ENCODE measurements at regions of chr2 and their contacts with region 1.

Region 1: GRCh38 chr2:101341901-101342624 is 33.6 kb upstream of the RNF149 start:
- DNase-seq: peak; percentile 80
- H3K4me3 ChIP-seq: no peak overlapping the region
- H3K27ac ChIP-seq: no peak overlapping the region
- H3K4me1 ChIP-seq: no peaks in the 10 kb centered on the region
- H3K27me3 ChIP-seq: no peaks in the 10 kb centered on the region
- CTCF ChIP-seq: peak; percentile 89

Region 2: DNA sequence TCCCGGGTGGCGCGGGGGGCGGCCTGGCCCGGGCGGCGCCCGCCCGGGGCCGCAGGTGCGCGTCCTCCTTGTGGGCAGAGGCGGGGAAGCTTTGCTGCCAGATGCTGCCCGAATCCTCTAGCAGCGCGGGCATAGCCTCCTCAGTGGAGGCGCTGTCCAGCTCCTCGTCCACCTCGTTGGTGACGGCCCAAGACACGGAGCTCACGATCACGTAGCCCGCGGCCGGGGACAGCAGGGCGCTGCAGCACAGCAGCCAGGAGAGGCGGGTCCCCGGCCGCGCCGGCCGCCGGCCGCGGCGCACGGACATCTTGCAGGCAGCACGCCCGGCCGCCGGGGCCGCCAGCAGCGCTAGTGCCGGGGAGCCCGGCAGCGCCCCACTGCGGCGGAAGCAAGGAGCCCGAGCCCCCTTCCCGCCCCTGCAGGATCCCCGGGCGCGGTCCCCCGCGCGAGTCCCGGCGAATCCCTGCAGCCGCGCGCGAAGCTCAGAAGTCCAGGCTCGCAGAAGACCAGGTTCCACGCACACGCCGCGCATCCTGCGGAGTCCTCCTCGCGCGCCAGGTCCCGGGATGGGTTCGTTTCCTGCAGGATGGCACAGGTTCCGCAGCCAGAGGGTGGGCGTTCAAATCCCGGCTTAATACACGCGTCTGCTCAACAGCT is 45.2 kb after region 1 on chr2 and contains the start of gene CREG2:
- CTCF ChIA-PET with region 1: interaction called, 13 read pairs
- POLR2A ChIA-PET with region 1: no interaction called
- intact Hi-C with region 1: no loop called
- DNase-seq: peak; percentile 60
- H3K4me3 ChIP-seq: peak within 1 kb of the TSS; percentile 46
- H3K27ac ChIP-seq: no peak within 1 kb of the TSS
- H3K4me1 ChIP-seq: peaks cover 5% of the 10 kb centered on the region
- H3K27me3 ChIP-seq: peaks cover 59% of the 10 kb centered on the region
- CTCF ChIP-seq: peak; percentile 54
- total RNA-seq, gene CREG2: not detected in 2 replicates

Region 3: DNA sequence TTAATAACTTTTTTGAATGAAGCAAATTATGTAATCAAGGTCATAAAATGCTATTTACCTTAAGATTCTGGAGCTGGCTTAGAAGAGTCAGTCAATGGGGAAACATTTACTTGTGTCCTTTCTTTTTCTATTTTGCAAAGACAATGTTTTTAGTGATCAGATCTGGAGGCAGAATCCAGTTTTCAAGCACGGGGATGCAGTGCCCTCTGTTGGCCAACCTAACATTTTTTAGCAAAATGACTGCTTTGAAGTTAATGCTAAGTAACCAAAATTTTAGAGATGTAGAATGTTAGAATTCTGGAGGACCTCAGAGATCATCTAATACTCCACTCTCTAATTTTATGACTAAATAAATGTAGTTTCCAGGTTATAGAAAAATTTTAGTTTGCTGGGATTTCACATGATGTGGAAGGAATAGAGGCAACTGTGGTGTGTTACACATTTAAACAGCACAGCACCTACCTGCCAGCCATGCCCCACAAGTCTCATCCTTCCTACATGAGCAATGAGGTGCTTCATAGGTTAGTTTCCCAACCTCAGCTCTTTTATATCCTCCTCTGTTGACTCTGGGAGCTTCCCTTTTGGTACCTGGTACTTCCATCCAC is 1107.4 kb after region 1 on chr2:
- CTCF ChIA-PET with region 1: no interaction called
- POLR2A ChIA-PET with region 1: no interaction called
- intact Hi-C with region 1: loop called (anchors 5 kb)
- DNase-seq: peak; percentile 24
- H3K4me3 ChIP-seq: no peak overlapping the region
- H3K27ac ChIP-seq: no peak overlapping the region
- H3K4me1 ChIP-seq: no peaks in the 10 kb centered on the region
- H3K27me3 ChIP-seq: peaks cover 14% of the 10 kb centered on the region
- CTCF ChIP-seq: peak; percentile 72

Measured in A673 (cell line).